ENCODE measurements at regions of chr6 and their contacts with region 1.

Region 1: GRCh38 chr6:165884813-165885765 is 222.0 kb upstream of the PDE10A start:
- H3K4me3 ChIP-seq: no peak overlapping the region
- H3K27ac ChIP-seq: no peak overlapping the region
- H3K4me1 ChIP-seq: no peaks in the 10 kb centered on the region
- CTCF ChIP-seq: peak; percentile 86

Region 2: DNA sequence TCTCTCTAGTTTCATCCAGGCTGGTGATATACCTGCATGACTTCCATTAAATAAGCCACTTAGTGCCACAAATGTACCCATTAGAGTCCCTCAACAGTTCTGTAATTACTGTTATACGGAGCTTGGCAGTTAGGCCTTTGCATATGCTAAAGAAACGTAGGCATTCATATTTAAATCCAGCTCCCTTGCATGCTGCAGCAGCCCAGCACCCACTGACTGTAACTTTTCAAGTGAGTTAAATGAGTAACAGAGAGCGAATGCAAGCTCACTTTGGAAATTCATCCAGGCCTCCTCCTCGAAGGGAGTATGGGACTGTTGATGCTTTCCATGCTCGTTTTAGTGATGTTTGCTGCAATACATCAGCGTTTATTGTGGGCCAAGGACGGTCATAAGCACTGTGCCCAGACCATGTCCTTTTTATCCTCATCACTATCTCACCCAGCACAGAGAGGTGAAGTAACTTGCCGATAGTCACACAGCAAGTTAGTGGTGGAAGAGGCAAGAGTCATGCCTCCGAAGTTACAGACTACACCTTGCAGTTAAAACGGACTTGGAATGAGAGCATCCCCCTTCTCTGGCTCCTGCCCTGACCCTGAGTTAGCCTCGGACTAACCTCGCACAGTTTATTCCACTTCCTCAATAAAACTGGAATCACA is 42.7 kb before region 1 on chr6:
- CTCF ChIA-PET with region 1: interaction called, 10 read pairs
- POLR2A ChIA-PET with region 1: no interaction called
- H3K4me3 ChIP-seq: no peak overlapping the region
- H3K27ac ChIP-seq: no peak overlapping the region
- H3K4me1 ChIP-seq: peaks cover 18% of the 10 kb centered on the region
- CTCF ChIP-seq: no peak

Region 3: DNA sequence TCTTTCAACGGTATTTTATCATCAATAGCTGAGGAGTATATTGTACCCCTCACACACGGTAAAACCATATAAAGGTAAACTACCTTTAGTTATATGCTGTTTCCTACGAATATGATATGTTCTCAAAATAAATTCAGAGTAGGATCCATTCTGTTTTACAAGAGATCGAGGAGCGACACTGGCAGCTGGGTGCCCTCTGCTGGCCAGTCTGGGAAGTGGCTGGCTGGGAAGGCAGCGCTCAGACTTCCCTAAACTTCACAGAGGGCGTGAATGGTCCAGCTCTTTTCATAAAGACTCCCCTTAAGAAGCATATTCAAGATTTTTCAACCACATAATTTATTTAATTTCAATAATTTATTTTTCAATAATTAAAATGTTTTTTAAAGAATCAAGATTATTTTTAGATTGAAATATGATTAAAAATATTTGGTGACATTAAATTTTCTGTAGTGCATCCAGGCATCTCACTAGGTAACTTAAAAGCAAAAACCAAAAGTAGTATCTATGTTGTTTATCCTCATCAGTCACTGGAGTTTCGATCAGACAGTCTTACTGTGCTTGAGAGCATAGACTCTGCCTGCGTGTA is 34.6 kb before region 1 on chr6:
- CTCF ChIA-PET with region 1: interaction called, 11 read pairs
- POLR2A ChIA-PET with region 1: no interaction called
- H3K4me3 ChIP-seq: no peak overlapping the region
- H3K27ac ChIP-seq: no peak overlapping the region
- H3K4me1 ChIP-seq: peaks cover 19% of the 10 kb centered on the region
- CTCF ChIP-seq: peak; percentile 66

Region 4: DNA sequence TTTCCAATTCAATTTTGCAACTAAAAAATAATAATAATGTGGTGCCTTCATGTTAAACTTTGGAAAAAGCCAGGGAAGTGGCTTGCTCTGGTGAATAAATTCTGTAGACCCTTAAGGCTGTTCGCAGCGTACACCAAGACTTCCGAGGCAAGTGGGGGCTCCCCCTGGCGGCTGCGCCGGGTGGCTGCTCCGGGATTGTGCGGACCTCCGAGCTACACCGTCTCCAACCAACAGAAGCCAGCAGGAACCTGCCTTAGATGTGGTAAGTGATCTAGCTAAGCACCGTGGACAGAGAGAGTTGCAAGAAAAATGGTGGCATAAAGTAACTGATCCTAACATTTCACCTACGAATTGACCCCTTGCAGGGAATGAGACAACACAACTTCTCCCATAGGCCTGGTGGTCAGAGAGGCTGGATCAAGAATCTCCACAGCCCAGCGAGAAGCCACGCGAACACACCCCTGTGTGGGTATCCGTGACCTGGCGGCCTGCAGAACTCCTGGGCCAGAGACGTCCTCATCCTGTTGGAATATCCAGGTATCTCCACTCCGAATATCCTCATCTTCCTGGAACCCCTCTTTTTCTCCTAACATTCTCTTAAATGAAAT is 212.9 kb after region 1 on chr6:
- CTCF ChIA-PET with region 1: interaction called, 267 read pairs
- POLR2A ChIA-PET with region 1: no interaction called
- H3K4me3 ChIP-seq: peak overlapping the region; percentile 19
- H3K27ac ChIP-seq: no peak overlapping the region
- H3K4me1 ChIP-seq: no peaks in the 10 kb centered on the region
- CTCF ChIP-seq: peak; percentile 36; the same call in 1 of the 2 replicates